Mucosa of descending colon (tissue), 3 donors: ENCODE measurements at regions of chr10 and their contacts with region 1.

Region 1: GRCh38 chr10:74262856-74263255 is 111.8 kb downstream of the ADK start:
- DNase-seq: no peak
- ATAC-seq: no peak
- H3K4me3 ChIP-seq: no peak overlapping the region
- H3K4me1 ChIP-seq: no peaks in the 10 kb centered on the region
- CTCF ChIP-seq: no peak

Region 2: DNA sequence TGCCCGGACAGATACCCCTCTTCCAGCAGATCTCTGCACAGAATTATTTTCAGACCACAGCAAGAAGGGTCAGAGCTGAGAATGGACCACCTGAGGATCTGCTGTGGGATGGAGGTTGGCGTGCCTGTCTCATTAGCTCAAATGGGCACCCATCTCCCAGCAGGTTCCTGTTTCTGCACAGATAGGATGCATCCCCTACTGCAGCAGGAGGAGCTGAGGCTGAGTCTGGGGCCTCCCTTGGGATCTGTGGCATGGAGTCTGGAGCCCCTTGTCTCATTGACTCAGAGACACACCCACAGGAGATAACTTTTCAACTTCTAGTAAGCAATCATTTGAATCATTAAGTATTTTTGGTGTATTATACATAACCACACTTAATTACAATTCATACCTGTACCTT is 100.9 kb after region 1 on chr10:
- intact Hi-C with region 1: no loop called
- DNase-seq: no peak
- ATAC-seq: no peak
- H3K4me3 ChIP-seq: no peak overlapping the region
- H3K4me1 ChIP-seq: no peaks in the 10 kb centered on the region
- CTCF ChIP-seq: no peak

Region 3: GRCh38 chr10:75035975-75036708 is 773.3 kb after region 1 on chr10:
- intact Hi-C with region 1: loop called in 1 of 2 experiments (anchors 10 kb)
- DNase-seq: no peak
- ATAC-seq: peak; percentile 66
- H3K4me3 ChIP-seq: no peak overlapping the region
- H3K4me1 ChIP-seq: no peaks in the 10 kb centered on the region
- CTCF ChIP-seq: no peak

Region 4: DNA sequence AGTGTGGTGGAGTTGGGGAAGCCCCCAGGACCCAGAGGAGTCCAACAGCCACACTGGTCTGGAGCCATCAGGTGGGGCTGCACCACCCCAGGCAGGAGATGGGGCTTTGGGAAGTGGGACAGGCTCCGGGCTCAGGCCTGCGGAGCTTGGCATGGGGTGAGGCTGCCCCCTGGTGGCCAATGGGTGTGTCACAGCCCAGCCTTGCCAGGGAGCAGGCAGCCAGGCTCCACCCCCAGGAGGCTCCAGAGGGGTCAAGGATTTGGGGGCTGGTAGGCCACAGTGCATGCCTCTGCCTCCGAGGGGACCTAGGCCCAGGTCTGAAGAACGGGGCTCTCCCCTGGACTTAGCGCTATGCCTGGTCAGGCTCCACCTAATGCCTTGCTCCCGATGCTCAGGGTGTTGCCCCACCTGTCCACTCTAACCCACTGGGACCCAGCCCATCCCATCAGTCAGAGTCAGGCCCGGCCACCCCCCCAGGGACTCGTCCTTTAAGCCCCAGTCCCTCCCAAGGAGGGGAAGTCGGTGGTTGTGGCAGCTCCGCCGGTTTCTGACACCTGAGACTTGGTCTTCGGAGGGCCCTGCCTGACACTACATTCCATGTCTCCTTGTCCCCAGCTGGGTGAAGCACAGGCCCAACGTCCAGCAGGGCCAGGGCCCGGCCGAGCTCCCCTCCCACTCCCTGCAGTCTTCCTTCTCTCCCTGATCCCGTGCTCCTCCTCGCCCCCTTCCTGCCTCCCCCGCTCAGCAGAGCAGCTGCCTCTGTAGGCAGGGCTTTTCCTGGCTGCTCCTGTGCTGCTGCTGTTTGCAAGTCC is 837.3 kb after region 1 on chr10:
- intact Hi-C with region 1: loop called in 1 of 2 experiments (anchors 5 kb)
- DNase-seq: peak; percentile 78 to 88 (median 84)
- ATAC-seq: peak; percentile 95
- H3K4me3 ChIP-seq: no peak overlapping the region
- H3K4me1 ChIP-seq: no peaks in the 10 kb centered on the region
- CTCF ChIP-seq: peak; percentile 85